Caco-2 (cell line): ENCODE measurements at regions of chr9 and their contacts with region 1.

Region 1: GRCh38 chr9:109520478-109521132 is 22.5 kb upstream of the PTPN3 start:
- DNase-seq: peak; percentile 76 to 79
- H3K4me3 ChIP-seq: no peak overlapping the region
- H3K4me3 Mint-ChIP-seq: no peak overlapping the region
- H3K27ac Mint-ChIP-seq: no peak overlapping the region
- H3K4me1 ChIP-seq: peaks cover 5% of the 10 kb centered on the region; the same call in 1 of the 2 replicates
- H3K4me1 Mint-ChIP-seq: no peaks in the 10 kb centered on the region
- H3K27me3 ChIP-seq: no peaks in the 10 kb centered on the region
- H3K27me3 Mint-ChIP-seq: peaks cover 5% of the 10 kb centered on the region
- CTCF ChIP-seq: peak; percentile 87 to 90

Region 2: DNA sequence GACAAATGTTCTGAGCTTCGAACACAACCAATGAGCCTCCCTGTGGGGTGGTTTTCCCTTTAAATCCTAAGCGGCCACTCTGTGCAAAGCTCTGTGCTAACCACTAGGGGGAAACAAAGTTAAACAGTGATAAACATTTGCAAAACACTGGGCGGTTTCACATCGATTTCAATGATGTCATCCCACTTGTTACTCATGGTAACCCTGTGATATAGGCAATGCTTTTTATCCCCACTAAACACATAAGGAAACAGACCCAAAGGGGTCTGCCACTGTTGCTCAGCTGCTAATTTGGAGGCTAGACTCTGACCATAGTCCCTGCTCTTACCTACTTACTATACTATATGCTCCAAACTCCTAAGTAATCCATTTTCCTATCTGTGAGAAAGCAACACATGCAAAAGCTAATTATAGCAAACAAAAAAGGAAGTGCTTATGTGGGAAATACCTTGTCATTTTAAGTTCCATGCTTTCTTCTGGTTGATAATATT is 79.8 kb before region 1 on chr9:
- CTCF ChIA-PET with region 1: interaction called, 3 read pairs
- POLR2A ChIA-PET with region 1: no interaction called
- intact Hi-C with region 1: loop called (anchors 1 kb)
- DNase-seq: peak; percentile 66 to 67
- H3K4me3 ChIP-seq: no peak overlapping the region
- H3K4me3 Mint-ChIP-seq: no peak overlapping the region
- H3K27ac Mint-ChIP-seq: peak overlapping the region; percentile 70
- H3K4me1 ChIP-seq: no peaks in the 10 kb centered on the region
- H3K4me1 Mint-ChIP-seq: no peaks in the 10 kb centered on the region
- H3K27me3 ChIP-seq: no peaks in the 10 kb centered on the region
- H3K27me3 Mint-ChIP-seq: no peaks in the 10 kb centered on the region
- CTCF ChIP-seq: peak; percentile 79 to 80

Region 3: DNA sequence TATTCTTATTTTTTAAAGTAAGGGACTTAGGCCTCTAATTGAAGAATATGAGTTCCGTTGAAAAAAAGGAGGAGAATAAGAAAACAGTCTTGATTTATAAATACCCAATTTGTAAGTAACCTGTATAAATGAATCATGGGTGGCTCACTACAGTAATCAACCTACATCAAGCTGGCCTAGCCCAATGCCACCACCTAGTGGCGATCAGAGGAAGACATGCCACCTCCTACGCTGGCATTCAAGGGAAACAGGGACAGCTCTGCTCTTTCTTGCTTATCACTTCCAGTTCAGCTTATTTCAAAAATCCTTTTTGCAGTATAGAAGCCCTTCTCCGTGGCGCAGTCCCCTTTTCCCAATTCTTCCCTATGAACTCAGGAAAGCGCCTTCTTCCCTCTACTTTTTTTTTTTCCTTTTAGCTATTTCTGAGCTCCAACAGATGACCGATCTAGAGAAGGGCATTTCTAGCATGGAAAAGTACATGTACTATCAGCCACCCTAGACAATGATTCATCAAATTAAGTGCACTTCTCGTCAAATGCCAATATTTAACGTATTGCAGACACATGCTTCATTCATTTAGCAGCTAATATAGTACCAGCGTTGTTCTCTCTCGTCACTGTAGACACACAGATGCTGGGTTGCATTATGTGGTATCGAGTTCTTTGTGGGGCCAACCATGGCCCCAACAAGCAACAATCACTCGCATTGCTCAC is 50.8 kb before region 1 on chr9:
- CTCF ChIA-PET with region 1: interaction called, 4 read pairs
- POLR2A ChIA-PET with region 1: no interaction called
- intact Hi-C with region 1: loop called (anchors 1 kb)
- DNase-seq: peak; percentile 70 to 78
- H3K4me3 ChIP-seq: no peak overlapping the region
- H3K4me3 Mint-ChIP-seq: no peak overlapping the region
- H3K27ac Mint-ChIP-seq: no peak overlapping the region
- H3K4me1 ChIP-seq: no peaks in the 10 kb centered on the region
- H3K4me1 Mint-ChIP-seq: peaks cover 5% of the 10 kb centered on the region
- H3K27me3 ChIP-seq: no peaks in the 10 kb centered on the region
- H3K27me3 Mint-ChIP-seq: no peaks in the 10 kb centered on the region
- CTCF ChIP-seq: peak; percentile 90 to 92

Region 4: DNA sequence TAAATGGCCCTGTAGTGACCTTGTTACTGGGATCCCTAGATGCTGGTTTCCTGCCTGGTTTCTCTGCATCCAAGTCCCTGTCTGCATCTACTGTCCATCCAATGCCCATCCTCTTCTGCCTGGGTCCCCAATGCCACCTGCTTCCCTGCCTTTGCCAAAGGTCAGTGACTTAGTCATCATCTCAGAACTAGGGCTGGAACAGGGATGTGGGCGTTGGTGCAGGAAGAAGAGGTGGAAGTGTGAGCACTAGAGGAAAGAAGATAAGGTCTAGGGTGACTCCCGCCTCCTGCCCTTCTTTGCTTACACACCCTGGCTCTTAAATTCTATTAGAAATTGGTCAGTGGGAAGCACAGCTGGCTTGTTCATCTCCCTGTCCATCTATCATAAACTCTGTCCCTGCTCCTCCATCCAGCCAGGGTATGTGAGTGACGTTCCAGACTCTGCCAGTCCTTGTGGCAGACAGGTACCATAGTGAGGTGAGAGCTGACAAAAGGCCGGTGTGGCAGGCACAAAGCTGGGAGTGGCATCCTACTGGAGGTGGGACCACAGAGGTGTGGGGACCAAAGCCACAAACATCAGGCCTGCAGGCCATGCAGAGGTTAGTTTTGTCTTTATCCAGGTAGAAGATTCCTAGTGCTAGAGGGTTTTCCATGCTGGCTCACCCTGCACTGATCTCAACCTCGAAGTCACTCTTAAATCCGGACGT is 31.7 kb before region 1 on chr9:
- CTCF ChIA-PET with region 1: no interaction called
- POLR2A ChIA-PET with region 1: no interaction called
- intact Hi-C with region 1: no loop called
- DNase-seq: no peak
- H3K4me3 ChIP-seq: no peak overlapping the region
- H3K4me3 Mint-ChIP-seq: no peak overlapping the region
- H3K27ac Mint-ChIP-seq: no peak overlapping the region
- H3K4me1 ChIP-seq: no peaks in the 10 kb centered on the region
- H3K4me1 Mint-ChIP-seq: no peaks in the 10 kb centered on the region
- H3K27me3 ChIP-seq: no peaks in the 10 kb centered on the region
- H3K27me3 Mint-ChIP-seq: no peaks in the 10 kb centered on the region
- CTCF ChIP-seq: no peak

Region 5: DNA sequence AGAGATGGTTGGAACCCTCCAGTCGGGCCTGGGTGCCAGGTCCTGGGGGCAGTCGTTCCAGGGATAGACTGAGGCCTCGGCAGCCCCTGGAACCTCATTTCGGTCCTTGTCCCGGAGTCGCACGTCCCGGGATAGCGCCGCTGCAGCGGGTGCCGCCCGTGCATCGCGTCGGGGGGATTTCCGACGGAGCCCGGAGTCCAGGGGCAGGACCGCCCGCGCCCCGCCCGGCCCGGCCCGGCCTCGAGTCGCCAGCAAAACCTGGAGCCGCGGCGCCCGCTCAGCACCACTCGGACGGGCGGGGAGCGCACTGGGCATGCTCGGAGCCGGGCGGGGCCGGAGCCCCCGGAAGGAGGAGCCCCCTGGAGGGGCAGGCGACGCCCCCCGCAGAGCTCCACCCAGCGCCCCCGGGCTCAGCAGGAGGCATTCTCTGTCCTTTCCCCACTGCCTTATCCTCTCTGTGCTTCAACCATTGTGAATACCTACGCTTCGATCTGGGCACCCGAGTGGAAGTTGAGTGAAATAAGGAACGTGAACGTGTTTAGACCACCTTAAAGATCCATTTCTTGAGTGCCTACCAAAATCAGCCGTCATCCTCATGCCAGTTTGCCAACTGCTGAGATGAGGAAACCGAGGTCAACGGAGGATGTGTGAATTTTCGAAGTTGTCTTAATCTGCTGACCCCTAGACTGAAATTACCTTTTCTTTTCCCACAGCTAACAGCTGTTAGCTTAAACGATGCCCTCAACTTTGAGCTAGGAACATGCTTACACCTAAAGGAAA is 20.8 kb before region 1 on chr9:
- CTCF ChIA-PET with region 1: no interaction called
- POLR2A ChIA-PET with region 1: no interaction called
- intact Hi-C with region 1: loop called (anchors 2 kb)
- DNase-seq: peak; percentile 87 to 88
- H3K4me3 ChIP-seq: peak overlapping the region; percentile 48
- H3K4me3 Mint-ChIP-seq: peak overlapping the region; percentile 83
- H3K27ac Mint-ChIP-seq: no peak overlapping the region
- H3K4me1 ChIP-seq: peaks cover 16% of the 10 kb centered on the region
- H3K4me1 Mint-ChIP-seq: peaks cover 23% of the 10 kb centered on the region
- H3K27me3 ChIP-seq: no peaks in the 10 kb centered on the region
- H3K27me3 Mint-ChIP-seq: no peaks in the 10 kb centered on the region
- CTCF ChIP-seq: no peak

Region 6: DNA sequence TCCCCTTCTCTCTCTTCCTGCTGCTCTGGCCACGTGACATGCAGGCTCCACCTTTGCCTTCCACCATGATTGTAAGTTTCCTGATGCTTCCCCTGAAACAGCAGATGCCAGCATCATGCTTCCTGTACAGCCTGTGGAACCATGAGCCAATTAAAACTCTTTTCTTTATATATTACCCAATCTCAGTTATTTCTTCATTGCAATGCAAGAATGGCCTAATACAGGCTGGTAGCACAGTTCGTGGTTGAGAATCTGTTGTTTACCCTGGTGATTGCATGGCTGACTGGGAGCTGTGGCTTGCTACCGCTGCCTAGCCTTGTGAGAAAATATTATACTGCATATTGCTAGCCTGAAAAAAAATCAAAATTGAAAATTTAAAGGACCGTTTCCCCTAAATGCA is 22.3 kb after region 1 on chr9:
- CTCF ChIA-PET with region 1: no interaction called
- POLR2A ChIA-PET with region 1: no interaction called
- intact Hi-C with region 1: no loop called
- DNase-seq: no peak
- H3K4me3 ChIP-seq: no peak overlapping the region
- H3K4me3 Mint-ChIP-seq: no peak overlapping the region
- H3K27ac Mint-ChIP-seq: no peak overlapping the region
- H3K4me1 ChIP-seq: no peaks in the 10 kb centered on the region
- H3K4me1 Mint-ChIP-seq: no peaks in the 10 kb centered on the region
- H3K27me3 ChIP-seq: no peaks in the 10 kb centered on the region
- H3K27me3 Mint-ChIP-seq: peaks cover 11% of the 10 kb centered on the region
- CTCF ChIP-seq: no peak